ENCODE measurements at regions of chr10 and their contacts with region 1.

Region 1: GRCh38 chr10:28984431-28984830 is 304.4 kb upstream of the LYZL1 start:
- DNase-seq: peak; percentile 84 to 86
- ATAC-seq: peak; percentile 86 to 98 (median 96)
- H3K4me3 ChIP-seq: no peak overlapping the region
- H3K27ac ChIP-seq: peak overlapping the region in 2 of 10 donors; percentile 32 to 39
- H3K4me1 ChIP-seq: peaks cover 0 to 25% (median 13%) of the 10 kb centered on the region in 9 donors
- H3K27me3 ChIP-seq: no peaks in the 10 kb centered on the region
- CTCF ChIP-seq: no peak

Region 2: GRCh38 chr10:28892816-28893547 is 91.4 kb before region 1 on chr10:
- intact Hi-C with region 1: loop called in 2 of 10 experiments (anchors 2 to 10 kb)
- DNase-seq: no peak
- ATAC-seq: no peak
- H3K4me3 ChIP-seq: no peak overlapping the region
- H3K27ac ChIP-seq: no peak overlapping the region
- H3K4me1 ChIP-seq: peaks cover 0 to 10% (median 4%) of the 10 kb centered on the region in 9 donors
- H3K27me3 ChIP-seq: no peaks in the 10 kb centered on the region
- CTCF ChIP-seq: no peak

Region 3: GRCh38 chr10:28930514-28931495 is 53.6 kb before region 1 on chr10:
- intact Hi-C with region 1: loop called in 1 of 10 experiments (anchors 5 kb)
- DNase-seq: peak in 1 of 2 donors; percentile 23
- ATAC-seq: peak in 6 of 8 donors; percentile 28 to 92 (median 57)
- H3K4me3 ChIP-seq: no peak overlapping the region
- H3K27ac ChIP-seq: peak overlapping the region in 1 of 10 donors; percentile 22
- H3K4me1 ChIP-seq: peaks cover 0 to 14% (median 0%) of the 10 kb centered on the region in 9 donors
- H3K27me3 ChIP-seq: no peaks in the 10 kb centered on the region
- CTCF ChIP-seq: no peak

Region 4: DNA sequence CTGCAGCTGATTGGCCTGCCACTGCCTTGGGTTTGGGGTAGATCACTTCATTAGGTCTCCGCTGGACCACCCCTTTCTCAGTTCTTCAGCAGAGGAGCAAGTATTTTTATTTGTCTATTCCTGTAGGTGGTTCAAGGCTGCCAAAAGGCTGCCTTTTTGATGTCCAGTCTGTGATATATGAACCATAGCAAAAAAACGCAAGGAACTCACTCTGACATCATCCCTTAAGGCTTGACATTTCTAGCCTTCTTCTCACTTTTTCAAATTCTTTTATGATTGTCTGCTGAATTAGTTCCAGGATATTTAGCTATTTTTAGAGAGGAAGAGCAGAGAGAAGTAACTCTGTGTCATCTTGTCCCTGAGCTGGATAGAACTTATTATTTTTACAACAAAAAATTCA is 38.0 kb before region 1 on chr10:
- intact Hi-C with region 1: loop called in 1 of 10 experiments (anchors 5 kb)
- DNase-seq: no peak
- ATAC-seq: peak in 1 of 8 donors; percentile 38
- H3K4me3 ChIP-seq: no peak overlapping the region
- H3K27ac ChIP-seq: no peak overlapping the region
- H3K4me1 ChIP-seq: peaks cover 0 to 17% (median 6%) of the 10 kb centered on the region in 9 donors
- H3K27me3 ChIP-seq: no peaks in the 10 kb centered on the region
- CTCF ChIP-seq: no peak

Measured in heart right ventricle (tissue), 16 donors.